ENCODE measurements at regions of chr17 and their contacts with region 1.

Region 1: GRCh38 chr17:64648234-64648633 is 13.9 kb downstream of the SMURF2 start:
- DNase-seq: no peak
- H3K4me3 Mint-ChIP-seq: no peak overlapping the region
- H3K27ac Mint-ChIP-seq: no peak overlapping the region
- H3K4me1 Mint-ChIP-seq: peaks cover 20% of the 10 kb centered on the region
- H3K27me3 Mint-ChIP-seq: no peaks in the 10 kb centered on the region

Region 2: DNA sequence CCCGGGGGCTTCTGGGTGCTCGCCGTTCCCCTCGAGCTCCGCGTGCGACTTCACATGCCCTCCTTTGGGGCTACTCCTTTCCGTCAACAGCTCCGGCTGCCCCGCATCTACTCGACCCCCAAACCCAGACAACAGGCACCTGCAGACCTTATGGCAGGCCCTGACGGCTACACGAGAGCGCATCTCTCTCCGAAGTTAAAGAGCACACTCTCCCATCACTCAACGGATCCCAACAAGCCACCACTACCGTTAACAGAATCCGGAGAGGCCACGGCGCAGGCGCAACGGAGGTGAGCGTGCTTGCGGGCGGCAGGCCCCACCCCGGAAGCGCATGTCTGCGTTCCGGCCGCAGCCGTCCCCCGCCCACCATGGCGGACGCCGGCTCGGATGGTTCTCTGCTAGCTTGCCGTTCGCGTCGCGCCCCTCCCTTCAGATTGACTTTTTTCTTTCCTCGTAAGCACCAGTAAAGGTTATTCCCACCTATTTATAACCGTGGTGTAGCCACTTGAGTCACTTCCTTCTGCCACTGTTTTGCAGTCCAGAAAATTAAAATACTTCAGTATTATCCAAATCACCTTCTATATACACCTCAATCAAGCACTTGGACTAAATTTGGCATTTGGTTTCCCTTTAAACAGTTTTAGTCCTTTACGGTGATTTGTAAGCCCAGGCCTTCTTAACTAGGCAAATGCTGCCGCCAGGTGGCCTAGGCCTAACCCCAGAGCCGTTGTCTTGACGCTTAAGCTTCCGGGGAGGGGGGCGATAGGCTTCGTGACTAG is 151.3 kb before region 1 on chr17 and contains the start of gene POLG2:
- intact Hi-C with region 1: loop called (anchors 2 kb)
- DNase-seq: peak; percentile 95
- H3K4me3 Mint-ChIP-seq: peak within 1 kb of the TSS; percentile 99
- H3K27ac Mint-ChIP-seq: peak within 1 kb of the TSS; percentile 96
- H3K4me1 Mint-ChIP-seq: peaks cover 60% of the 10 kb centered on the region
- H3K27me3 Mint-ChIP-seq: no peaks in the 10 kb centered on the region
- total RNA-seq, gene POLG2: 29.6 and 33.8 TPM in 2 replicates

Region 3: DNA sequence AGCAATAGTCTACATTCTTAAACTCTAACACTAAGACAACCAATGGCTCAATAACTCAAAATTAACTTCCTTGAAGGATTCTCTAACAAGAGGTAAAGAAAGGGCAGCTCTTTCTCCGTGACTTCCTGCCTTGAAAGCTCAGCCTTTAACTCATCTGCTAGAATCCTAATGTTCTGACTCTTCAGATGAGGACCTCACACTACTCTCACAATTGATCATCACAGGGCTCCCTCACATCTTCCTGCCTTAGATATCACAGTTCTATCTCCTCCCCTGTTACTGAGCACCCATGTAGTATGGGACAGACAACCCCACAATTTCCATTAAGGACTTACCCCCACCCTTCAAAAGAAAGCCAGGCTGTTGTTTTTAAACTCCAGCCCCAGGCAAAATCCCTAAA is 19.6 kb before region 1 on chr17:
- intact Hi-C with region 1: loop called (anchors 2 kb)
- DNase-seq: no peak
- H3K4me3 Mint-ChIP-seq: peak overlapping the region; percentile 19
- H3K27ac Mint-ChIP-seq: peak overlapping the region; percentile 70
- H3K4me1 Mint-ChIP-seq: peaks cover 42% of the 10 kb centered on the region
- H3K27me3 Mint-ChIP-seq: no peaks in the 10 kb centered on the region

Region 4: GRCh38 chr17:64661976-64662773 is 13.9 kb after region 1 on chr17 and contains the start of gene SMURF2:
- intact Hi-C with region 1: no loop called
- DNase-seq: peak; percentile 75
- H3K4me3 Mint-ChIP-seq: peak within 1 kb of the TSS; percentile 96
- H3K27ac Mint-ChIP-seq: peak within 1 kb of the TSS; percentile 94
- H3K4me1 Mint-ChIP-seq: peaks cover 27% of the 10 kb centered on the region
- H3K27me3 Mint-ChIP-seq: no peaks in the 10 kb centered on the region
- total RNA-seq, gene SMURF2: 12.6 and 13.1 TPM in 2 replicates

Measured in activated T-helper 2 cell treated with anti-CD3 and anti-CD28 coated beads, Interferon-gamma antibody, Interleukin-2, Interleukin-4, amounts not matched to agents 10 μg/mL and 5 μg/mL and 100 μg/mL, durations not matched to agents 14 hours and 24 hours and 36 hours (primary cell).